Head of caudate nucleus (tissue), 42 donors: ENCODE measurements at regions of chr3 and their contacts with region 1.

Region 1: GRCh38 chr3:65785065-65785645 is 253.6 kb downstream of the MAGI1 start:
- DNase-seq: peak in 10 of 42 donors; percentile 18 to 63 (median 36)

Region 2: GRCh38 chr3:66138336-66139313 is 353.5 kb after region 1 on chr3:
- intact Hi-C with region 1: loop called (anchors 5 kb)
- DNase-seq: peak in 39 of 42 donors; percentile 10 to 78 (median 53)

Region 3: GRCh38 chr3:66195347-66195783 is 410.2 kb after region 1 on chr3:
- intact Hi-C with region 1: loop called (anchors 10 kb)
- DNase-seq: peak; percentile 61 to 89 (median 79)